Activated T-helper 1 cell treated with anti-CD3 and anti-CD28 coated beads, Interleukin-12 subunit alpha, Interleukin-12 subunit beta, Interleukin-2, Interleukin-4 antibody, amounts not matched to agents 30 ng/mL and 10 ng/mL and 1 ng/mL, durations not matched to agents 14 hours and 24 hours and 36 hours (primary cell): ENCODE measurements at regions of chr6 and their contacts with region 1.

Region 1: GRCh38 chr6:149934249-149935156 is 7.3 kb upstream of the ULBP2 start:
- DNase-seq: peak; percentile 60
- H3K4me3 Mint-ChIP-seq: no peak overlapping the region
- H3K27ac Mint-ChIP-seq: no peak overlapping the region
- H3K4me1 Mint-ChIP-seq: peaks cover 30% of the 10 kb centered on the region
- H3K27me3 Mint-ChIP-seq: peaks cover 85% of the 10 kb centered on the region

Region 2: DNA sequence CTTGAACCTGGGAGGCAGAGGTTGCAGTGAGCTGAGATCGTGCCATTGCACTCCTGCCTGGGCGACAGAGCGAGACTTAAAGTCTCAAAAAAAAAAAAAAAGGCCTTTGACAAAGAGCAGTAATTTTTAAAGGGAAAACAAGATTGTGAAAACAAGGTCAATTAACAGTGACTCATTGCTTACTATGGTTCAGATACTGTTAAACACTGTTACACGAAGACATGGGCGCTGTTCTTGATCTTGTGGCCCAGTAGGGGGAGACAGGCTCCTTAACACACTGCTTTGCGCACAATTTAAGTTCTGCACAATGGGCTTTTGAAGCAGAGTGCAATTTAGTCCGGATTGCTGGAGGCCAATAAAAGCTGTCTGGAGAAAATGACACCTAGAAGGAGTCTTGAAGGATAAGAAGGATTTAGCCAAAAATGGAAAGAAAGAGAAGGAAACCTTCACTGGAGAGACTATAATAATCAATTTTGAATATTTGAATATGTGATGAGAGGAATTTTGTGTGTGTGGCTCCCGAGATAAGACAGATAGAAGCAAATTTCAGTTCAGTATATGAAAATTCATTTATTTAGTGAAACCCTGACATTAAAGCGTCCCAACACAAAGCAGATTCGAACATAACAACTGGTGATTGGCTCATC is 210.6 kb before region 1 on chr6:
- intact Hi-C with region 1: no loop called
- DNase-seq: peak; percentile 17
- H3K4me3 Mint-ChIP-seq: no peak overlapping the region
- H3K27ac Mint-ChIP-seq: no peak overlapping the region
- H3K4me1 Mint-ChIP-seq: peaks cover 23% of the 10 kb centered on the region
- H3K27me3 Mint-ChIP-seq: no peaks in the 10 kb centered on the region

Region 3: DNA sequence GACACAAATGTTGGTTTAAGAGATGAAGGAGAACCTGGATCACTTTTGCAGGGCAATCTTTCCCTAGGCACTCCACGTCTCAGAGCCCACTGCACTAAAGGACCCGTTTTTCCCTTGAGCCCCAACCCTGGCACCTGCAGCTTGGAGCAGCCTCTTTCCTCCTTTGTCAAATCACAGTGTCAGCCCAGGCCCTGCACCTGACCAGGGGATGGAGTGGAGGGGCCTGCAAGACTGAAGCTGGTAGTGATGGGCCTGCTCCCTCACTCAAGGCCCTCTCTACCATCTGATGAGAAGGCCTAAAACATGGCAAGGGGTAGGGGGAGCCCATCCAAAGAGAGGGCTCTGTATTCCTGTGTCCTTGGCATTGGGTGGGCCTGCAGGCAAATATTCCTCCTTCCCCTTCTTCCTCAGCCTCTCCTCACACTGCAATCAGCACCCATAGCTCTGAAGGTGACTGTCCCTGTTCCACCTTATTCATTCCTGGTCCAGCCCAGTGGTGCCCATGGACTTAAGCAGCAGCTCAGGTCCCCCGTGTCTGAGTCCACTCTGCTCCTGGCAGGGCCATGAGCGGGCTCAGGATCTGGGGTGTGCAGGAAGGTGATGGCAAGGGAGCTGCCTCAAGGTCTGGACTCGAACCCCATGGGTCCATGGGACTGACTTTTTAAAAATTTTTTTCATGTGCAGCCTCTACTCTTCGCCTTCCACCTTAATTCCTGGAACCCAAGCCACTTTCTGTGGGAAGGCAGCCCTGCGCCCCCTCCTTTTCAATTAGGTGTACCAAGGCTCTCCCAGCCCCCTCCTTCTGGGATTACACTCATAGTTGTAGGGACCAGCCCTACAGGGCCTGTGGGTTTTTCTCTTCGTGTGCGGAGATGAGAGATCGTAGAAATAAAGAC is 18.3 kb before region 1 on chr6:
- intact Hi-C with region 1: no loop called
- DNase-seq: no peak
- H3K4me3 Mint-ChIP-seq: no peak overlapping the region
- H3K27ac Mint-ChIP-seq: no peak overlapping the region
- H3K4me1 Mint-ChIP-seq: no peaks in the 10 kb centered on the region
- H3K27me3 Mint-ChIP-seq: peaks cover 43% of the 10 kb centered on the region

Region 4: GRCh38 chr6:150016324-150017185 is 82.1 kb after region 1 on chr6:
- intact Hi-C with region 1: loop called (anchors 1 kb)
- DNase-seq: peak; percentile 44
- H3K4me3 Mint-ChIP-seq: no peak overlapping the region
- H3K27ac Mint-ChIP-seq: no peak overlapping the region
- H3K4me1 Mint-ChIP-seq: peaks cover 21% of the 10 kb centered on the region
- H3K27me3 Mint-ChIP-seq: peaks cover 70% of the 10 kb centered on the region

Region 5: DNA sequence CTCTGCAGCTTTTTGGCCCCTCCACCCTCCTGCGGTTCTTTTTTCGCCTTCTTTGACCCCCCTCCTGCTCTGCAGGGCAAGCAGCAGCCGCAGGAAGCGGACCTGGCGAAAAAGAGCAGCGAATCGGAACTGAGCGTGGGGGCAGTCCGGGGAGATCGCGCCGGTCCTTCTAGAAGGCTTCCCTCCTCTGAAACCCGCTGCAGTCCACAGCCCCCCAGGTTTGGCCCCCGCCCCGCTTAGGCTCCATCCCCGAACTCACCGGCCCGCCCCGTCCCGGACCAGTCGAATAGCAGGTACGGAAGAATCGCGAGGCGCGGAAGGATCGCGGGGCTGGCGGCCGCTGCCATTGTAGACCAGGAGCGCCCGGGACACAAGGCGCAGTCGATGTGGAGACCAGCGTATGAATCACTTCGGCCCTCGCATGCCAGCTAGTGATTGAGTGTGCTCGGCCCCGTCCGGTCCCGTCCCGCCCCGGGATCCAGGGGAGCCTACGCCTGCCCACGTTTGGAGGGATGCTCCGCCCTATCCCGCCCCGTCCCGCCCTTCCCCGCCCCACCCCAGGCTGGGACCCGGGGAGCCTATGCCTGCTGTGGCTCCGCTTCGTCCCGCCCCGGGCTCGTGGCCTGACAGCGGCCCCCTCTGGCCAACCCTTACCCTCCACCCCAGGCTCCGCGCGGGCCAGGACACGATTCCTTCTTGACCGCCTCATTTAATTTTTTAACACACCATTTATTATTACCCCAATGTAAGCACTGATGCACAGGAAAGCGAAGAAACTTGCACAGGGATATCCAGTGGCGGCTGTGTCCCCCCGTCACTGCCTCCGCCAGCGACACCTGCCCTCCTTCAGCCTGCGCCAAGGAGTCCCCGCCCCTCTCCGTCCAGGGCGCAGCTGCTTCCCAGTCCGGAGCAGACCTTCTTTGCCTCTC is 134.5 kb after region 1 on chr6 and contains the start of gene ULBP3:
- intact Hi-C with region 1: loop called (anchors 2 kb)
- DNase-seq: peak; percentile 55
- H3K4me3 Mint-ChIP-seq: peak within 1 kb of the TSS; percentile 83
- H3K27ac Mint-ChIP-seq: no peak within 1 kb of the TSS
- H3K4me1 Mint-ChIP-seq: peaks cover 16% of the 10 kb centered on the region
- H3K27me3 Mint-ChIP-seq: peaks cover 22% of the 10 kb centered on the region
- total RNA-seq, gene ULBP3: 0.56 TPM in 1 of 2 replicates, not detected in the other

Region 6: DNA sequence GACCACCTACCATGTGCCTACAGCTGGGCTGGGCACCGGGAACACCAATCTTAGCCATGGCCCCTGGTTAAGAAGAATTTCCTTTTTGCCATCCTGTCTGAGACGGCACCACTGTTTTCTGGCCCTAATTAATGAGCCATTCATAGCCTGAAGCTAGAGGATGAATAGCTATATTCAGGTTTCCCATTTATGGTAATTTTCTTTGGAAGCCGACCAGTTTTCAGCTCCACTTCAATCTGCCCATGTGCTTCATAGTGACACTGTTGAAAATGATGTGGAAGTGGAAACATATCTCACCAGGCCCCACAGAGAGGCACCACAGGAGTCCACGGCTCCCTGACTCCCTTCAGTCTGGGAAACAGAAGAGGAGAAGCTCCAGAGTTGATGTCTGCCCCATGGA is 157.0 kb after region 1 on chr6:
- intact Hi-C with region 1: no loop called
- DNase-seq: no peak
- H3K4me3 Mint-ChIP-seq: no peak overlapping the region
- H3K27ac Mint-ChIP-seq: no peak overlapping the region
- H3K4me1 Mint-ChIP-seq: no peaks in the 10 kb centered on the region
- H3K27me3 Mint-ChIP-seq: peaks cover 12% of the 10 kb centered on the region

Region 7: DNA sequence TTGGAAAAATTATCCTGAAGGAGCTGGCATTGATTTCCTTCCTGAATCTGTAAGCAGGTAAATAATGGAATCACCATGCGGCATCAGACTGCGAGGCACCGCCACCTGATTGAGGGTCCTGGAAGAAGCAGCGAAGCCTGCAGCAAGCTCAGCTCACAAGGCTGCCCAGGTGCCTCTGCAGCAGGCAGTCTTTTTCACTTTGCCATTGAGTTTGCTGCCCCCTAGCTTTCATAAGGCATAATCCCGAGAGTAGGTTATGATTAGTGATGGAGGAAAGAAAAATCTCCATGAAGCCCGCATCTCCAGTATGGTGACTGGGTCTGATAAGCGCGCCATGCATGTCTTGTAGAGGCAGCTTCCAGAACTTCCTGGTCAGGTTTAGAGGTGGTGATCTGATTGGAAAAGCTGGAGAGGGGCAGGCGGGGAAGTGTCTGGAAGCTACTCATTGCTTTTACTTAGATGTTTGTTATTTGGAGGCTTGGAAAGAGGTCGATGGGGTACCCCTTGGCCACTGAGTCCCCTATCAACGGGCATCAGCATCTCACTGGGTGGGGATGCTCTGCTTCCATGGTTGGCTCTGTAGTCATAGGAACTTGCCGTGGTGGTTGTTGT is 461.0 kb after region 1 on chr6:
- intact Hi-C with region 1: loop called (anchors 10 kb)
- DNase-seq: peak; percentile 12
- H3K4me3 Mint-ChIP-seq: no peak overlapping the region
- H3K27ac Mint-ChIP-seq: no peak overlapping the region
- H3K4me1 Mint-ChIP-seq: no peaks in the 10 kb centered on the region
- H3K27me3 Mint-ChIP-seq: peaks cover 4% of the 10 kb centered on the region

Region 8: GRCh38 chr6:150492507-150492906 is 558.0 kb after region 1 on chr6:
- intact Hi-C with region 1: no loop called
- DNase-seq: no peak
- H3K4me3 Mint-ChIP-seq: no peak overlapping the region
- H3K27ac Mint-ChIP-seq: no peak overlapping the region
- H3K4me1 Mint-ChIP-seq: peaks cover 8% of the 10 kb centered on the region
- H3K27me3 Mint-ChIP-seq: peaks cover 6% of the 10 kb centered on the region